OCI-LY7 (cell line): ENCODE measurements at regions of chr7 and their contacts with region 1.

Region 1: DNA sequence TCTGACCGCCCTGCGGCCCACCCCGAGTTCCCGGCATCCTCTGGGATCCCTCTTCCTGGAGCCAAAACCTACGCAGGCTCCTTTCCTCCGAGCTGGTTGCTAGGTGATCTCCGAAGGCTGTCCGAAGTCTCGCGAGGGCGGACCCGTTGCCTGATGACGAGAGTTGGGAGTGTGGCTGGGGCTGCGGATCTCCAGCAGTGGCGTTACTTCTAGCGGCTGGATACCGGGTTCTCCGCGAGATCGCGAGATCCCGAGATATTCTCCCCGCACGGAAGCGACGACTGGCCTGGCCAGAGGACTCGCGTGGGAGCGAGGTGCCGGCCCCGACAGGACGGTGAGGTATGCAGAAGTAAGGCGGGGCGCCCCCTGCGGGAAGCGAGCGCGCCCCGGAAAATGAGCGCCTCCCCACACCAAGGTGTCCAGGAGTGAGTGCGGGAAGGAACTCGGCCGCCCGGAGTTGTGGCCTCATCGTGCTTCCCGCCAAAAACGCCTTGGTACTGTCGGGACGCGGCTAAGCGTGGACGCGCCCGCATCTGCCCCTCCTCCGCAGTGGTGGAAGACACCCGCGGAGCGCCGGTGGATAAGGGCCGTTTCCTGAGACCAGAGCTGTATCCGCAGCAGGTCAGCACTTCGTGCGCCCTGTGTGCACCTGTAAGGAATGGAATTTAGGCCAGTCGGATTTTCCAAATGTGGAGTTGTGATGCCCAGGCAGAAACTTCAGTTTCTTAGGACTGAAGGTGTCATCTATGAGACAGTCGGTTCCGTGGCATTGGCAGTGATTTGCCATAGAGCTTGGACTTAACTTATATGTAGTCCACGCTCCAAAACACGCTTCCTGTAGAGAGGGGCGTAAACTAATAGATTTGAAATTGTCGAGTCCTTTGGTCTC is at the start of gene AGBL3:
- DNase-seq: peak; percentile 94
- H3K4me3 ChIP-seq: peak within 1 kb of the TSS; percentile 95
- H3K27ac ChIP-seq: peak within 1 kb of the TSS; percentile 49
- H3K4me1 ChIP-seq: peaks cover 4% of the 10 kb centered on the region
- CTCF ChIP-seq: peak; percentile 81
- total RNA-seq, gene AGBL3: 3.5 and 5.3 TPM in 2 replicates

Region 2: DNA sequence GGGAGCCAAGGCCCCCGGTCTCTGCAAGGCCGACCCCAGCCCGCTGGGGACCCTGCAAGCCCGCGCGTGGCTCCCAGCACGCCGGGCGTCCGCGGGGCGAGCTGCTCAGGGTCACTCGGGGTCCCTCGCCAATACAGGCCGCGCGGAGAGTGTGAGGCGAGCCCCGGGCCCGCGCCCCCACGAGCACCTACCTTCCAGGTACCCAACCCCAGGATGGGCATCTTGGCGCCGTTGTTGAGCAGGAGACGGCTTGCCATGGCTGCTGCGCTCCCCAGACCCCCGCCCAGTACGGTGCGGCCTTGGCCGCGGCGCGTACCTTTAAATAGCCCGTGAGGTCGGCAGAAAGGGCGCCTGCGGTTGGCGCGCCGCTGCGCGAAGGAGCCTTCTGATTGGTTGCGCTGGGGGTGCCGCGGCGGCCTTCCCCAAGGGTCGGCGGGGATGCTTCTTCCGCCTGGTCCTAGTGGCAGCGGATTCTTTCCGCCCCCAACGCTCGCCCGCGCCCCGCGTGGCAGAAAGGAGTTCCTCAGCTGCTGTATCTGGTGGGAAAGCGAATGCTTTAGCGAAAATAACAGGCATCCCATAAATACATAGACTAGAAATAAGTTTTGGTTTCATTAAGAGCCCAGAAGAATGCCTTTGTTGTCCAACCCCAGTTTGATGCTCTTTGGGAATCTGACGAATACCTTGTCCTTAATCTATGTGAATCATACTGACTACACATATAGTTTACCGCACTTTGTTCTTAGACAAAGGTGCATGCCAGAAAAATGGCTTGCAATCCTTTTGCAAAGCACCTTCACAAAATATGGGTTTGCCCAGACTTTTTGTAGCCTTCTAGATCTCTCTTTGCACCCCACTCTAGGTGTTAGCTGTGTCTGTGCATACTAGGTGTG is 527.6 kb before region 1 on chr7 and contains the start of gene AKR1B1:
- CTCF ChIA-PET with region 1: no interaction called
- POLR2A ChIA-PET with region 1: no interaction called
- intact Hi-C with region 1: loop called (anchors 10 kb)
- DNase-seq: peak; percentile 96
- H3K4me3 ChIP-seq: peak within 1 kb of the TSS; percentile 96
- H3K27ac ChIP-seq: peak within 1 kb of the TSS; percentile 57
- H3K4me1 ChIP-seq: peaks cover 29% of the 10 kb centered on the region
- CTCF ChIP-seq: peak; percentile 77
- total RNA-seq, gene AKR1B1: 66.4 and 75.7 TPM in 2 replicates

Region 3: GRCh38 chr7:134669845-134670373 is 316.7 kb before region 1 on chr7:
- CTCF ChIA-PET with region 1: no interaction called
- POLR2A ChIA-PET with region 1: no interaction called
- intact Hi-C with region 1: no loop called
- DNase-seq: peak; percentile 10
- H3K4me3 ChIP-seq: no peak overlapping the region
- H3K27ac ChIP-seq: no peak overlapping the region
- H3K4me1 ChIP-seq: peaks cover 16% of the 10 kb centered on the region
- CTCF ChIP-seq: no peak